ENCODE measurements at regions of chr12 and their contacts with region 1.

Region 1: GRCh38 chr12:102990419-102990818 is 32.9 kb downstream of the ASCL1 start:
- DNase-seq: no peak

Region 2: GRCh38 chr12:102964872-102965271 is 25.5 kb before region 1 on chr12:
- intact Hi-C with region 1: no loop called
- DNase-seq: no peak

Region 3: DNA sequence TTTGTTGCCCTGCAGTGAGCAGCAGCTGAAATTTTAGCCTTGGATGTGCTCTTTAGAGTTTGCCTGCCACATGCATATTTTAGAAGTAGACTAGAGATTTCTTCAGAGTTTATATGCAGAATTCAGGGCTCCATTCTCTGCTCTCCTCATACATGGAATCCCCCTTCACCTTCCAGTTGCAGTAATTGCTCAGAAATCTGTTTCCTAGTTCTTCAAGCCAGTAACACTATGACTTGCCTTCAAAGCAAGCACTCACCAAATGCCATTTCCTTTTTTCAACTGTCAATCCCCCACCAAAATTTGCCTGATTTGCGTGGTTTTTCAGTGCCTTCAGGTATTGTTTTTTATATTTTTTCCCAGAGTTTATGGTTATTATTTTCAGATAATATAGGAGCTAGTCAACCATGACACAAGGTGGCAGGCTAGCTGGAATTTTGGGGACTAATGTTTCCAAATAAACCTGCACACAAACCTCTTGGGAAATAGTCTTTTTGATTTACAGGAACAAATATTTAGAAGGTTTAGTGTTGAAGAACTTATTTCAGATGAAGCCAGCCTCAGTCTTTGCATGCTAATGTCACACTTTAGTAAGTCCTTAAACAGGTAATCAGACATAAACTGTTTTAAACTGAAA is 46.3 kb after region 1 on chr12:
- intact Hi-C with region 1: loop called in 1 of 2 experiments (anchors 2 kb)
- DNase-seq: no peak

Region 4: DNA sequence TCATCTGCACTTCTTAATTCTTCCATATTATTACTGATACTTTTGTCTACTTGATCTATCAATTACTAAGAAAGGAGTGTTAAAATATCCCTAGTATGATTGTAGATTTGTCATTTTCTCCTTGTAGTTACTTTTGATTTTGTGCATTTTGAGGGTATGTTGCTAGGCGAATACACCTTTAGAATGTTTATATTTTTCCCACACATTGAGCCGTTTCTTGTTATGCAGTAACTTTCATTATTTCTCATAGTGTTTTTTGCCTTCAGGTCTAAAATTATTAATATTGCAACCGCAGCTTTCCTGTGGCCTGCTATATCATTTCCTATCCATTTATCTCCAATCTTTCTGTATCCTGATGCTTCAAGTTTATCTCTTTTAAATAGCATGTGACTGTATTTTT is 549.9 kb after region 1 on chr12:
- intact Hi-C with region 1: loop called in 1 of 2 experiments (anchors 5 kb)
- DNase-seq: no peak